ENCODE measurements at regions of chr1 and their contacts with region 1.

Region 1: DNA sequence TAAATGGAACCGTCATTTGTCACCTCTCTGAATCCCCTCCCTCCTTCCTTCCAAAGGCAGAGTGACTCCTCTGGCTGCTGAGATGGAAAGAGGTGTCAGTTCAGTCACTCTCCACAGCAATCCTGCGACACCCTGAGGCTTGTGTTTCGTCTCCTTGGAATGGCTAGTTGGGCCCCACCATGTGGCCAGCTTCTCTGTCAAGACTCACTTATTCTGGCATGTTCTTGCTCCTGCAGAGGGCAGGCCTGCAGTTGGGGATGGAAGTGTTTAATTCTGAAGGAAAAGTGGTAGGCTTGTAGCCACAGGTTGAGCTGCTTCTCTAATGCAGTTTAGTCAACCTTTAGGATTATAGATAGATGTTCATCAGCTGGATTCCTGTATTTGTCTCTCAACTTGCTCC is 149.6 kb downstream of the LMO4 start:
- ATAC-seq: peak in 6 of 8 experiments; percentile 17 to 55 (median 37)
- H3K4me3 ChIP-seq: no peak overlapping the region
- H3K27ac ChIP-seq: no peak overlapping the region
- H3K4me1 ChIP-seq: no peaks in the 10 kb centered on the region

Region 2: DNA sequence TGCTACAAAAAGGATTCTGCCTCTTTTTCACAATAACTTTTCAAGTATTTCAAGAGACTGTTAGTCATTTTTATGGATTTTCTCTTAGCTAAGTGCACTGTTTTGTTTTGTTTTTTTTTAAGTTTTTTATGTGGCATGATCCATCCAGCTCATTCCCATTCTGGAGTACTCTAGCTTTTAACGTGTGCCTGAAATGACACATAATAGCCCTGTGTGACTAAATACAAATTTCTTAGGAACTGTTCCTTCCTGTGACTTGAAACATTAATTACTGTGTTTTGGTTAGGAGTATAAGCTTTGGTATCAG is 419.9 kb before region 1 on chr1:
- in situ Hi-C with region 1: no loop called
- ATAC-seq: no peak
- H3K4me3 ChIP-seq: no peak overlapping the region
- H3K27ac ChIP-seq: no peak overlapping the region
- H3K4me1 ChIP-seq: no peaks in the 10 kb centered on the region

Region 3: DNA sequence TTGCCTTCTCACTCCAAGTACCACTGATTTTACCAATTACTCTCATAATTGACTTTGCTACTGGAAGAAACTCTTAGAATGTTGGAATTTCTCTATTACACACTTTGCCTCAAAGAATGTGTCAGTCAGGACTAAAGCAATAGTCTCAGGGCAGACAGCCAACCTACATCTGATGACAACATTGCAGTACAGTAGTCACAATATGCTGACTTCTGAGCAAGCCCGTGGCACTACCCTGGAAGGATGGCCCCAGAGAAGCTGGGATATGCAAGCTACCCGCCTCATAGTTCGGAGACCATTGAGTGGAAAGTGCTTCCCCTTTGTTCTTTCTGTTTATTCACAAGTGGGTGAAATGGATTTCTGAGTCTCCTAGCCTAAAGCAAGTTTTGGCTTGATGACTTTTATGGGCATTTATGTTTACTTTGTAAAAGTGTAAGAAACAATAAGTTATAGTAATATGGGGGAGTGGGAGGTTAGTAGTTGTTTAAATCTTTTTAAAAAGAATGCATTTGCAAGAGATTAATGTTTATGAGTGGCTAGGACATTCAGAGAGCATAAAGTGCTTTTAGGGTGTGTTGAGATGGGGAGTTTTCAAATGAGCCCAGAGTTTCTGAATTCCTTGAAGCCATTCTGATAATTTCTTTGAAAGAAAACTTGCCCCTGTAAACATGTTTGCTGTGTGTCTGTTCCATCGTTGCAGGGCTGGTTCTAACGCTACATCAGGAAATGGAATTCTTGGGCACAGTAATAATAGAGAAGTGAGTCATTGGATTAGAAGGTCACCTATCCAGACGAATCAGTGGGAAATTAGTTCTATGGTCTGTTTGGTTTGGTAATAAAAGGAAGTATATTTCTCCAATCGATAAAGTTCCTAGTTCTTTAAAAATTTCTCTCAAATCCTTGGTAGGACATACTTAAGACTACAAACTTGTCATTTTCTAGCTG is 85.7 kb before region 1 on chr1:
- in situ Hi-C with region 1: loop called in 1 of 9 experiments (anchors 25 kb)
- ATAC-seq: peak in 4 of 8 experiments; percentile 52 to 84 (median 74)
- H3K4me3 ChIP-seq: no peak overlapping the region
- H3K27ac ChIP-seq: no peak overlapping the region
- H3K4me1 ChIP-seq: peaks cover 3 to 17% of the 10 kb centered on the region in 2 donors

Region 4: GRCh38 chr1:87410776-87411480 is 67.3 kb before region 1 on chr1:
- in situ Hi-C with region 1: no loop called
- ATAC-seq: peak in 6 of 8 experiments; percentile 21 to 92 (median 69)
- H3K4me3 ChIP-seq: no peak overlapping the region
- H3K27ac ChIP-seq: no peak overlapping the region
- H3K4me1 ChIP-seq: no peaks in the 10 kb centered on the region

Measured in motor neuron (in vitro differentiated cells).